HepG2 (cell line): ENCODE measurements at regions of chr1 and their contacts with region 1.

Region 1: GRCh38 chr1:43276673-43277072 is 6.9 kb downstream of the TMEM125 start:
- DNase-seq: peak; percentile 87
- ATAC-seq: peak; percentile 75
- H3K4me3 ChIP-seq: peak overlapping the region; percentile 17 to 55 (median 30); a peak in 5 of 6 replicates
- H3K27ac ChIP-seq: peak overlapping the region; percentile 53
- H3K4me1 ChIP-seq: peaks cover 76% of the 10 kb centered on the region
- H3K27me3 ChIP-seq: no peaks in the 10 kb centered on the region; a peak in 1 of 5 replicates
- CTCF ChIP-seq: no peak
- EP300 ChIP-seq: peak; percentile 73 to 74; a peak in 3 of 4 replicates
- POLR2A ChIP-seq: no peak
- RAD21 ChIP-seq: no peak

Region 2: DNA sequence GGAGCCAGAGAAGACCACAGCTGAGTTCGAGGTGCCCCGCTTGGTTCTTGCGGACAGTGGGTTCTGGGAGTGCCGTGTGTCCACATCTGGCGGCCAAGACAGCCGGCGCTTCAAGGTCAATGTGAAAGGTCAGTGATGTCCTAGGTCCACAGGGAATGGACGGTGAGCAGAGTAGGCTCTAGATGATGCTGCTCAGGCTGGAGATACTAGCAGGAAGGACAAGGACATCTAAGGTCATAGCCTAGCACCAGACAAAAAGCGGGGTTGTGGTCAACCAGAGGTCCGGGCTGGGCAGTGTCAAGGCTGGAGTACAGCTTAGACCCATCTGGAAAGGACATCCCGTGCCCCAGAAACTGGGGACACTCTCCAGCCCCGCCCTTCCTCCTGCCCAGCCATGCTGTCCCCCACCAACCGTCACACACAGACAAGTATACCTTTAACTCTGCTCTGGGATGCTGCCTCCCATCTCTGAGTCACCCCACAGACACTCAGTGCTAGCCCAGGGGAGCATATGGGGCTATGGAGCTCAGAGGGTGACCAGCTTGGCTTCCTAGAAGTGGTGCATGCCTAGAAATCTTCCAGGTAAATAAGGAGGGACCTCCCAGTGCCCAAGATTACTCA is 32.8 kb after region 1 on chr1:
- CTCF ChIA-PET with region 1: no interaction called
- POLR2A ChIA-PET with region 1: no interaction called
- in situ Hi-C with region 1: no loop called
- intact Hi-C with region 1: no loop called
- DNase-seq: no peak
- ATAC-seq: no peak
- H3K4me3 ChIP-seq: no peak overlapping the region
- H3K27ac ChIP-seq: no peak overlapping the region
- H3K4me1 ChIP-seq: peaks cover 27% of the 10 kb centered on the region
- H3K27me3 ChIP-seq: peaks cover 1 to 60% of the 10 kb centered on the region in 2 experiments; a peak in 3 of 5 replicates
- CTCF ChIP-seq: no peak
- EP300 ChIP-seq: no peak
- POLR2A ChIP-seq: no peak
- RAD21 ChIP-seq: no peak

Region 3: DNA sequence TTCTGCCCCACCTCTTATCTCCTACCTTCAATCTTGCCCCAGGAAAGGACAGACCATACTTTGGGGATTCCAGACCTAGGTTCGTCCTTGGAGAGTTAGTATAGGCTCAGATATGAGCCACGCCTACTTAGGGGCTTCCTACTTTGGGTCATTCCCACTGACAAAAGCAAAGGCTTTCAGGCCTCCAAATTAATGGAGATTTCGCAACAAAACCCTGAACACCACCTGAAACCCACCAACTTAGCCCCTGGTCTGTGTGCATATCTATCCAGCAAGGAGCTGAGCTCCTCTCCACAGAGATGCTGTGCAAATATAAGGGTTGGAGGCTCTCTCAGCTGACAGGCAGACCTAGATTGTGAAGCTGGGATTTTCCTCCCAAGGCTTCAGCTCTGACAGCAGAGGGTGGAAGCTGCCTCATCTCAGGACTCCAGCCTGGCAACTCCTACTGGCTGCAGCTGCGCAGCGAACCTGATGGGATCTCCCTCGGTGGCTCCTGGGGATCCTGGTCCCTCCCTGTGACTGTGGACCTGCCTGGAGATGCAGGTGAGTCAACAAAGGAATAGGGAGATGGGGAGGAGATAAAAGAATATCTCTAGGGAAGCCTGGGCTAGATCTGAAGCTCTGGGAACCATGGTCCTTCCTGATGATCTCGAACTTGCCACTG is 63.0 kb after region 1 on chr1:
- CTCF ChIA-PET with region 1: no interaction called
- POLR2A ChIA-PET with region 1: interaction called, 3 read pairs
- in situ Hi-C with region 1: no loop called
- intact Hi-C with region 1: loop called (anchors 2 kb)
- DNase-seq: no peak
- ATAC-seq: no peak
- H3K4me3 ChIP-seq: no peak overlapping the region
- H3K27ac ChIP-seq: no peak overlapping the region
- H3K4me1 ChIP-seq: peaks cover 43% of the 10 kb centered on the region
- H3K27me3 ChIP-seq: no peaks in the 10 kb centered on the region
- CTCF ChIP-seq: no peak
- EP300 ChIP-seq: no peak
- POLR2A ChIP-seq: no peak
- RAD21 ChIP-seq: no peak